GM10248 (cell line): ENCODE measurements at regions of chr12 and their contacts with region 1.

Region 1: DNA sequence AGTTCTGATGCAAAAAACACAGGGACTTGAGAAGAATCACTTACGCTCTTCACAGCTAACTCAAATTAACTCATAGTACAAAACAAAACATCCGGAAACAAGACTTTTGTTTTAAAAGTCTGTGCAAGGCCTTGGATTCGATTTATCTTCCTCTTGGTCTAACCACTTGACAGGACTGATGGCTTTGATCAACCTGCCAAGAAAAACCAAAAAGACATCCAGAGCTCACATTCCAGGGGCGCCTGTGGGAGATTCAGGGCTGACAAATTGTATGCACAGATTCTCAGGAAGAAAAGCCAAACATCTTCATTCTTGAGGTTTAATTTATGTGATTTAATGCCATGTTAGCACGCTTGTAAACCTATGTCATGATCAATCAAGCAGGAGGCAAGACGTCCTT is 129.1 kb upstream of the TMCC3 start:
- DNase-seq: no peak
- CTCF ChIP-seq: no peak

Region 2: DNA sequence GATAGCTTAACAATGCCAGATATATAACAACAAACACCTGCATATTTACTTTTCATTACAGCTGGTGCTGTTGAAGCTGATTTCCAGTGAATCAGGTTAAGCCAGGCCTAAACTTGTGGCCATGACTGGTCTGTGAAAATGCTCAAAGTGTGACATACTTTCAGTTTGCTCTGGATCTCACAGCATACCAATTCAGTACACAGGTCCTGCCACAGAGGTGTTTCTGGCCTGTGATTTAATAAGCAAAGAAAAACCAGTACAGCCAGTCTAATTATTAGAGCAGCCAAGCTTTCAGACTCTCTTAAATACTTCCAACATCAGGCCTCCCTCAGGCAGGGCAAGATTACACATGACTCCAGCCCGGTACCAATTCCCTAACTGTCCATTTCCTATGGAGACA is 101.7 kb before region 1 on chr12:
- CTCF ChIA-PET with region 1: no interaction called
- POLR2A ChIA-PET with region 1: no interaction called
- DNase-seq: peak; percentile 45
- CTCF ChIP-seq: no peak

Region 3: DNA sequence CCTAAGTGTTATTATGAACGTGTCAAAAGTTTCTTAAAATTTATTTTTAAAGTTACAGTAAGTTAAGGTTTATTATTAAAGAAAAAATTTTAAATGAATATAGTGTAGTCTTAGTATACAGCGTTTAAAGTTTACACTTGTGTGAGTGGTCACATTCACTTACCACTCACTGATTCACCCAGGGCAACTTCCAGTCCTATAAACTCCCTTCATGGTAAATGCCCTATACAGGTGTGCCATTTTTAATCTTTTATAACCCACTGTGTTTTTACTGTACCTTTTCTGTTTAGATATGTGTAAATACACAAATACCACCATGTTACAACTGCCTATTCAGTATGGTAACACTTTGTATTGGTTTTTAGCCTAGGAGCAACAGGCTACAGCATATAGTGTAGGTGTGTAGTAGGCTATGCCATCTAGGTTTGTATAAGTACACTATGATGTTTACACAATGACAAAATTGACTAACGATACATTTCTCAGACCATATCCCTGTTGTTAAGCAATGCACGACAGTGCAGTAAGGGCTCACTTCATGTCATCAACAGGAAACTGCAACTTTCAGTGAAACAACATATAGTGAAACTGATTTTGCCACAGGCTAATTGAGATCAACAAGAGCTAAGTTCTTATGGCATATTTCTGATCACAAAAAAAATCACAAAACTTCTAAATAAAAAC is 17.1 kb before region 1 on chr12:
- CTCF ChIA-PET with region 1: interaction called, 15 read pairs
- POLR2A ChIA-PET with region 1: no interaction called
- DNase-seq: peak; percentile 48
- CTCF ChIP-seq: no peak

Region 4: DNA sequence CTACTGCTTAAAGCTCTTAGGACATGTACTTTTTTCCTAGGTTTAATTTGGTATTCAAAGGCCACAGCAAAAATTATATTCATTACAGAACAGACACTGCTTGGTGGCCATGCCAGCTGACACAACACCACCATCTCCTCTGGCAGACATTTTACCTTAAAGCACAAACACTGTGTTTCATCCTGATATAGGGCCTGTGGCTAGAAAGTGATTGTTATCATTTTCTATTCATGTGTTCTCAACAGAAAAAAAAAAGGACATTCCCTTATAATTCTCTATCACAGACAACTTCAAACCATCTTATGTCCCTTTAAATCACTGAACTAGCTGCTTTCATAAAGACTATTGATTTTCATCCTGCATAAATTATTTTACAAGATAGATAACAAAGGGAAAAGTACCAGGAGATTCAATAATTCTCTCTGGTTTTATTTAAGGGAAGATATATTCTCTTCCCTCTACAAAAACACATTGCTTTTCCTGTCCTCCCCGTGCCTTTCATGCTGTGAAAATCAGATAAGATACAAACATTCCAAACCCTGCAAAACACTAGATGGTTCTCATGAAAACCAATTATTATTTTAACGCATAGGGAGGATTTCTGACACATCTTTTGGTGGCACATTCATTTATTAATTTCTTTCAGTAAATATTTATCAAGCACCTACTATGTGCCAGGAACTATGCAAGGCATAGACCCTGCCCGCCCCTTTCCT is 10.2 kb after region 1 on chr12:
- CTCF ChIA-PET with region 1: interaction called, 55 read pairs
- POLR2A ChIA-PET with region 1: no interaction called
- DNase-seq: no peak
- CTCF ChIP-seq: no peak

Region 5: GRCh38 chr12:94815958-94816357 is 36.5 kb after region 1 on chr12:
- CTCF ChIA-PET with region 1: no interaction called
- POLR2A ChIA-PET with region 1: no interaction called
- DNase-seq: no peak
- CTCF ChIP-seq: peak; percentile 2